Naive thymus-derived CD4-positive, alpha-beta T cell (primary cell): ENCODE measurements at regions of chr20 and their contacts with region 1.

Region 1: GRCh38 chr20:17682103-17682888 is at the start of gene RRBP1:
- DNase-seq: peak; percentile 89 to 97 (median 97)
- ATAC-seq: peak; percentile 94
- H3K4me3 ChIP-seq: peak within 1 kb of the TSS; percentile 80
- H3K4me3 Mint-ChIP-seq: peak within 1 kb of the TSS; percentile 86 to 93 (median 90)
- H3K27ac ChIP-seq: peak within 1 kb of the TSS; percentile 74
- H3K27ac Mint-ChIP-seq: peak within 1 kb of the TSS; percentile 71 to 92 (median 86)
- H3K4me1 ChIP-seq: peaks cover 0 to 18% of the 10 kb centered on the region in 2 donors
- H3K4me1 Mint-ChIP-seq: peaks cover 20 to 26% (median 24%) of the 10 kb centered on the region in 7 donors
- H3K27me3 ChIP-seq: peaks cover 0 to 4% of the 10 kb centered on the region in 2 donors
- H3K27me3 Mint-ChIP-seq: peaks cover 22 to 42% (median 33%) of the 10 kb centered on the region in 5 donors
- total RNA-seq, gene RRBP1: 27.8 to 73.9 (median 29.1) TPM

Region 2: GRCh38 chr20:16573001-16573965 is 1109.0 kb before region 1 on chr20 and contains the start of gene KIF16B:
- CTCF ChIA-PET with region 1: no interaction called
- POLR2A ChIA-PET with region 1: no interaction called
- intact Hi-C with region 1: loop called in 1 of 2 experiments (anchors 2 kb)
- DNase-seq: peak; percentile 62 to 97 (median 76)
- ATAC-seq: peak; percentile 88
- H3K4me3 ChIP-seq: peak within 1 kb of the TSS; percentile 78
- H3K4me3 Mint-ChIP-seq: peak within 1 kb of the TSS; percentile 88 to 97 (median 92)
- H3K27ac ChIP-seq: peak within 1 kb of the TSS; percentile 61
- H3K27ac Mint-ChIP-seq: peak within 1 kb of the TSS; percentile 52 to 90 (median 85)
- H3K4me1 ChIP-seq: peaks cover 9 to 11% of the 10 kb centered on the region in 2 donors
- H3K4me1 Mint-ChIP-seq: peaks cover 16 to 61% (median 50%) of the 10 kb centered on the region in 7 donors
- H3K27me3 ChIP-seq: no peaks in the 10 kb centered on the region
- H3K27me3 Mint-ChIP-seq: peaks cover 0 to 8% (median 0%) of the 10 kb centered on the region in 5 donors
- total RNA-seq, gene KIF16B: 8.4 to 13.7 (median 11.0) TPM

Region 3: GRCh38 chr20:17530716-17531664 is 151.3 kb before region 1 on chr20 and contains the start of gene BFSP1:
- CTCF ChIA-PET with region 1: no interaction called
- POLR2A ChIA-PET with region 1: no interaction called
- intact Hi-C with region 1: loop called (anchors 2 to 10 kb)
- DNase-seq: peak in 6 of 9 donors; percentile 4 to 62 (median 26)
- ATAC-seq: peak; percentile 75
- H3K4me3 ChIP-seq: peak within 1 kb of the TSS; percentile 46
- H3K4me3 Mint-ChIP-seq: peak within 1 kb of the TSS; percentile 62 to 96 (median 82)
- H3K27ac ChIP-seq: no peak within 1 kb of the TSS
- H3K27ac Mint-ChIP-seq: peak within 1 kb of the TSS in 2 of 9 donors; percentile 64 to 95
- H3K4me1 ChIP-seq: peaks cover 0 to 5% of the 10 kb centered on the region in 2 donors
- H3K4me1 Mint-ChIP-seq: peaks cover 0 to 27% (median 9%) of the 10 kb centered on the region in 7 donors
- H3K27me3 ChIP-seq: peaks cover 0 to 6% of the 10 kb centered on the region in 2 donors
- H3K27me3 Mint-ChIP-seq: peaks cover 12 to 23% (median 17%) of the 10 kb centered on the region in 5 donors
- total RNA-seq, gene BFSP1: 0.42 to 3.4 TPM in 2 of 5 experiments, not detected in the others

Region 4: DNA sequence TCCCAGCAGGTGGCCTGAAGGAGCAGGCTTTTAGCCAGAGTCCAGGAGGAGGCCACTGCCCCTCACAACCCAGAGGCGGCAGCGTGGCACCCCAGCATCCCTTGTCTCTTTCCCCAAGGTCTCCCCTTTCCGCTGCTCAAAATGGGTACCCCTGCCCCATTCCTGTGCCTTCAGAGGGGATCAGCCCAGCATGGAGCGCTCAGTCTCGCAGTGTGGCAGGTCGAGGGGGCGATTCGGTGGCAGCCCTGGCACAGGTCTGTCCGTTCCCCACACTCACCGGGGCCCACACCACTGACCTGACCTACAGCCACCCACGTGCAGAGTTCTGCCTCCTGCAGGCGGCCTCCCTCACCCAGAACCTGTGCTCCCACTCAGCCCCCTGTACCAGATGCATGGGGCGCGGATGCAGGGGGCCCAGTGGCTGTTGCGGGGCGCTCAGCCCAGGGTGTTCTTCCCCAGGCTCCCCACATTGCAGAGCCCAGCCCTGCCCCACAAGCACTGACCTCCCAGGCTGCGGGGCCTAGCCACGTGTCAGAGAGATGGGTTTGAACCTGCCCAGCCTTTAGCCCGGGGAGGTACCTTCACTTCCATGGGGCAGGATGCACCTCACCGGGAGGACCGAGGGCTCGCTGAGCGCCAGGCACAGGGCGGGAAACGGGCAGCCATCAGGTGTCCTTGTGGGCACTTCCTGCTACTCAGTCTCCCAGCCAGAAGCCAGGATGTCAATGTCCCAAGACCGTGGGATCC is 70.6 kb before region 1 on chr20:
- CTCF ChIA-PET with region 1: interaction called, 8 read pairs
- POLR2A ChIA-PET with region 1: interaction called, 5 read pairs
- intact Hi-C with region 1: loop called (anchors 1 to 5 kb)
- DNase-seq: peak in 4 of 9 donors; percentile 7 to 30 (median 20)
- ATAC-seq: no peak
- H3K4me3 ChIP-seq: peak overlapping the region; percentile 36
- H3K4me3 Mint-ChIP-seq: peak overlapping the region in 8 of 10 donors; percentile 23 to 85 (median 68)
- H3K27ac ChIP-seq: peak overlapping the region; percentile 60
- H3K27ac Mint-ChIP-seq: peak overlapping the region; percentile 85 to 98 (median 95)
- H3K4me1 ChIP-seq: peaks cover 39 to 40% of the 10 kb centered on the region in 2 donors
- H3K4me1 Mint-ChIP-seq: peaks cover 20 to 53% (median 40%) of the 10 kb centered on the region in 7 donors
- H3K27me3 ChIP-seq: no peaks in the 10 kb centered on the region
- H3K27me3 Mint-ChIP-seq: no peaks in the 10 kb centered on the region

Region 5: GRCh38 chr20:17859616-17860232 is 177.4 kb after region 1 on chr20:
- CTCF ChIA-PET with region 1: no interaction called
- POLR2A ChIA-PET with region 1: no interaction called
- intact Hi-C with region 1: no loop called
- DNase-seq: no peak
- ATAC-seq: peak; percentile 56
- H3K4me3 ChIP-seq: no peak overlapping the region
- H3K4me3 Mint-ChIP-seq: no peak overlapping the region
- H3K27ac ChIP-seq: no peak overlapping the region
- H3K27ac Mint-ChIP-seq: no peak overlapping the region
- H3K4me1 ChIP-seq: peaks cover 0 to 14% of the 10 kb centered on the region in 2 donors
- H3K4me1 Mint-ChIP-seq: peaks cover 0 to 27% (median 6%) of the 10 kb centered on the region in 7 donors
- H3K27me3 ChIP-seq: no peaks in the 10 kb centered on the region
- H3K27me3 Mint-ChIP-seq: peaks cover 13 to 23% (median 19%) of the 10 kb centered on the region in 5 donors

Region 6: DNA sequence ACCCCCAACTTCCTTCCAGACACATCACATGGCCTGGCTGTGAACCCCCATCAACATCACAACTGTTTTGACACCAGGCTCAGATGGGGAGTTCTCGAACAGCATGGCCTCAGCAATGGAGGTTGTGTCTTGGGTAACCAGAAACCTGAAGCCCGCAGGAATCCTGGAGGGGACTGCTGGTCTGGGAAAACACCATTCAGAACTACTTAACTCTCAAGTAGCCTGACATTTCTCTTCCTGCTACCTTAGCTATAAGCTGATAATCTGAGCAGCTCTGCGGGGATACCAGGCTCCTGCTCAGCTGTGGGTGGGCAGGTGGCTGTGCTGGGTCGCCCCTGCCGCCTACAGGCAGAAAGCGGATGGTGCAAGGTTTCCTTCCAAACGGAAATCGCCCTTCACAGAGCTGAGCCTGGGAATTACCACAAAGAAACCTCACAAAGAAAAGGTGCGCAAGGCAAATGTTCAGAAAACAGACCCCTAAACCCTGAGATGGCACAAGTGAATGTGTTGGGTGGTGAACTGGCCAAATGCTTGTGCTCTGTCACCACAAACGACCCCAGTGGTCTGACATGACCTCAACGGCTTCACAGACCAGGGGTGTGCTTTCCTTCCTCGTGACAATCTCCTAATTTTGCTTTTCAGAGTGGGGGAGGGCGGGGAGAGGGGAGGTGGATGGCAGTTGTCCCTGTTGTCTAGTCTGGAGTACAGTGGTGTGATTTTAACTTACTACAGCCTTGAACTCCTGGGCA is 256.7 kb after region 1 on chr20:
- CTCF ChIA-PET with region 1: interaction called, 3 read pairs
- POLR2A ChIA-PET with region 1: no interaction called
- intact Hi-C with region 1: loop called in 1 of 2 experiments (anchors 1 kb)
- DNase-seq: peak; percentile 18 to 53 (median 34)
- ATAC-seq: peak; percentile 91
- H3K4me3 ChIP-seq: no peak overlapping the region
- H3K4me3 Mint-ChIP-seq: peak overlapping the region in 6 of 10 donors; percentile 4 to 43 (median 37)
- H3K27ac ChIP-seq: no peak overlapping the region
- H3K27ac Mint-ChIP-seq: peak overlapping the region in 4 of 9 donors; percentile 34 to 68 (median 51)
- H3K4me1 ChIP-seq: peaks cover 5 to 9% of the 10 kb centered on the region in 2 donors
- H3K4me1 Mint-ChIP-seq: peaks cover 0 to 22% (median 12%) of the 10 kb centered on the region in 7 donors
- H3K27me3 ChIP-seq: no peaks in the 10 kb centered on the region
- H3K27me3 Mint-ChIP-seq: no peaks in the 10 kb centered on the region

Region 7: DNA sequence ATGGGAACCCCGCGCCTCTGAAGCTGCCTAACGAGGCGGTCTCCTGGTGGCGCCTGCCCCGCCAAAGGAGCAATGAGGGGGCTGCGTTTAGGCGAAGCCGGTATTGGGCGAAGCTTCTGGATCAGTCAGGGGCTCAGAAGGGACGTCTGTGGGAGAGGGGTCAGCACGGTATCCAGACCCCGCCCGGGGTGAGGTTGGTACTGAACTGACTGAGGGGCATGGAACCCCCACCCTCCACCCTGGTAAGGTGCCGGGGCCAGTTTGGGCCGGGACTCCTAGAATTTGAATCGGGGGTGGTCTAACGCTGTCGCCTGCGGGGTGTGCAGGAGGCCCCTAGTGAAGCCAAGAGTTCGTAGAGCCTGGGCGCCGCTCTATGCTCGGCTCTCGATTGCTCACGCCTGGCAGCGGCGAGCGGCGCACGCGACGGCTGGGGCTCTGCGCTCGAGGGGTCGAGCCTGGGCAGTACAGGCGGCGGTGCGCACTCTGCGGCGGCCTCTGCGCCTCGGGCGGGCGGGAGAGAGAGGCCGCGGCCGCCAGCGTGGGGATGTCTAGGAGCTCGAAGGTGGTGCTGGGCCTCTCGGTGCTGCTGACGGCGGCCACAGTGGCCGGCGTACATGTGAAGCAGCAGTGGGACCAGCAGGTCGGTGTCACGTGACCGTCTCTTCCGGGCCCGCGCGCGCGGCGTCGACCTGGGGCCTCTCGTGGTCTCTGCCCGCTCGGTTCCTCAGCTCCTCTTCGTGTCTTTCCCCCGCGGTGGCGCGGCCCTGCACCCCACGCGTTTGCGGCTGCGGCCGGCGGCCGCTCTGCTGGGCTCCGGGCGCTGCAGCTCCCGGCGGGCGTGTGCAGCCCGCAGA is 455.3 kb after region 1 on chr20 and contains the starts of genes KAT14 and PET117:
- CTCF ChIA-PET with region 1: no interaction called
- POLR2A ChIA-PET with region 1: interaction called, 4 read pairs
- intact Hi-C with region 1: loop called (anchors 1 to 2 kb)
- DNase-seq: peak; percentile 85 to 96 (median 93)
- ATAC-seq: peak; percentile 98
- H3K4me3 ChIP-seq: peak within 1 kb of the TSS; percentile 99
- H3K4me3 Mint-ChIP-seq: peak within 1 kb of the TSS; percentile 76 to 92 (median 88)
- H3K27ac ChIP-seq: peak within 1 kb of the TSS; percentile 89
- H3K27ac Mint-ChIP-seq: peak within 1 kb of the TSS; percentile 85 to 95 (median 92)
- H3K4me1 ChIP-seq: peaks cover 13 to 15% of the 10 kb centered on the region in 2 donors
- H3K4me1 Mint-ChIP-seq: peaks cover 23 to 44% (median 31%) of the 10 kb centered on the region in 7 donors
- H3K27me3 ChIP-seq: no peaks in the 10 kb centered on the region
- H3K27me3 Mint-ChIP-seq: peaks cover 0 to 7% (median 0%) of the 10 kb centered on the region in 5 donors
- total RNA-seq, gene KAT14: 12.3 to 26.7 (median 16.2) TPM
- total RNA-seq, gene PET117: 9.0 to 20.3 (median 11.7) TPM

Region 8: GRCh38 chr20:18507218-18508021 is 825.1 kb after region 1 on chr20 and contains the start of gene SEC23B:
- CTCF ChIA-PET with region 1: no interaction called
- POLR2A ChIA-PET with region 1: interaction called, 3 read pairs
- intact Hi-C with region 1: loop called (anchors 1 kb)
- DNase-seq: peak; percentile 88 to 100 (median 99)
- ATAC-seq: peak; percentile 91
- H3K4me3 ChIP-seq: peak within 1 kb of the TSS; percentile 74
- H3K4me3 Mint-ChIP-seq: peak within 1 kb of the TSS; percentile 91 to 100 (median 100)
- H3K27ac ChIP-seq: peak within 1 kb of the TSS; percentile 90
- H3K27ac Mint-ChIP-seq: peak within 1 kb of the TSS; percentile 99 to 100 (median 100)
- H3K4me1 ChIP-seq: peaks cover 17 to 28% of the 10 kb centered on the region in 2 donors
- H3K4me1 Mint-ChIP-seq: peaks cover 25 to 59% (median 50%) of the 10 kb centered on the region in 7 donors
- H3K27me3 ChIP-seq: no peaks in the 10 kb centered on the region
- H3K27me3 Mint-ChIP-seq: peaks cover 0 to 2% (median 0%) of the 10 kb centered on the region in 5 donors
- total RNA-seq, gene SEC23B: 39.0 to 102 (median 40.9) TPM